GM12878 (cell line): ENCODE measurements at regions of chr14 and their contacts with region 1.

Region 1: GRCh38 chr14:24310646-24311604 is at the start of gene LTB4R:
- DNase-seq: no peak
- ATAC-seq: peak; percentile 75
- H3K4me3 ChIP-seq: peak within 1 kb of the TSS; percentile 47
- H3K27ac ChIP-seq: peak within 1 kb of the TSS; percentile 45; the same call in 1 of the 2 replicates
- H3K4me1 ChIP-seq: peaks cover 37% of the 10 kb centered on the region
- H3K27me3 ChIP-seq: no peaks in the 10 kb centered on the region
- CTCF ChIP-seq: peak; percentile 10 to 40 (median 29); a peak in 3 of 6 replicates
- EP300 ChIP-seq: no peak
- POLR2A ChIP-seq: peak; percentile 54; the same call in 1 of the 2 replicates
- RAD21 ChIP-seq: no peak
- polyA plus RNA-seq, gene LTB4R: 1.2 to 1.7 TPM

Region 2: GRCh38 chr14:23447361-23448350 is 863.3 kb before region 1 on chr14:
- CTCF ChIA-PET with region 1: no interaction called
- POLR2A ChIA-PET with region 1: no interaction called
- RAD21 ChIA-PET with region 1: no interaction called
- SMC1A ChIA-PET with region 1: no interaction called
- in situ Hi-C with region 1: no loop called
- intact Hi-C with region 1: no loop called
- DNase-seq: no peak
- ATAC-seq: peak; percentile 27; the same call in 1 of the 3 replicates
- H3K4me3 ChIP-seq: no peak overlapping the region
- H3K27ac ChIP-seq: peak overlapping the region; percentile 35
- H3K4me1 ChIP-seq: peaks cover 26% of the 10 kb centered on the region
- H3K27me3 ChIP-seq: no peaks in the 10 kb centered on the region; a peak in 1 of 4 replicates
- CTCF ChIP-seq: no peak
- EP300 ChIP-seq: no peak
- POLR2A ChIP-seq: no peak
- RAD21 ChIP-seq: no peak

Region 3: DNA sequence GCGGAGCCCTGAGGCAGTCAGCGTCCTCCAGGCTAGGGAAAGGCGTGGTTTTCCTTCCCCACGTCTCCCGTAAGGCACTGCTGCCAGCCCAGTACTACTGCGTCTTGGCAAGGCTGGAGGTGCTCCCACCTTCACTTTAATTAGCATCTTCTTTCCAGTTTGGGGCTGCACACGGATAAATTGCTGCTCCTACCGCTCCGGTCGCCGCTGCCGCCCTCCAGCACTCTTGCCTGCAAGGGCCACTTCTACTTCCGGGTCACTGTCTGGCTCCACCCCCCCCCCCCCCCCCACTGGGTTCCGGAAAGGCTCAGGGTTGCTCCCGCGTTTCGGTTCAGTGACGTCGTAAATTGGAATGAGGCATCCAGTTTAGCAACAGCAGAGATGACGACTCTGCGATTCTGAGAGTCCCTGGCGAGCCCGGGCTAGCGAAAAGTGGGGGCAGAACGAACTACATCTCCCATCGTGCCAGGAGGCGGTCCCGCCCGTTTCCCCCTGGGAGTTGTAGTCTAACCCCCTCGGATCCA is 78.7 kb before region 1 on chr14 and contains the start of gene NEDD8:
- CTCF ChIA-PET with region 1: interaction called, 11 read pairs
- POLR2A ChIA-PET with region 1: no interaction called
- RAD21 ChIA-PET with region 1: interaction called, 3 read pairs
- SMC1A ChIA-PET with region 1: no interaction called
- in situ Hi-C with region 1: no loop called
- intact Hi-C with region 1: no loop called
- DNase-seq: peak; percentile 69
- ATAC-seq: peak; percentile 86
- H3K4me3 ChIP-seq: peak within 1 kb of the TSS; percentile 87
- H3K27ac ChIP-seq: peak within 1 kb of the TSS; percentile 84
- H3K4me1 ChIP-seq: peaks cover 14% of the 10 kb centered on the region
- H3K27me3 ChIP-seq: no peaks in the 10 kb centered on the region
- CTCF ChIP-seq: no peak
- EP300 ChIP-seq: no peak
- POLR2A ChIP-seq: peak; percentile 72; the same call in 1 of the 2 replicates
- RAD21 ChIP-seq: no peak
- polyA plus RNA-seq, gene NEDD8: 838 to 991 TPM

Region 4: GRCh38 chr14:24271134-24271833 is 39.6 kb before region 1 on chr14 and contains the start of gene RABGGTA:
- CTCF ChIA-PET with region 1: interaction called, 29 read pairs
- POLR2A ChIA-PET with region 1: interaction called, 5 read pairs
- RAD21 ChIA-PET with region 1: interaction called, 8 read pairs
- SMC1A ChIA-PET with region 1: no interaction called
- in situ Hi-C with region 1: no loop called
- intact Hi-C with region 1: no loop called
- DNase-seq: peak; percentile 80
- ATAC-seq: peak; percentile 89
- H3K4me3 ChIP-seq: peak within 1 kb of the TSS; percentile 88
- H3K27ac ChIP-seq: peak within 1 kb of the TSS; percentile 99
- H3K4me1 ChIP-seq: peaks cover 25% of the 10 kb centered on the region
- H3K27me3 ChIP-seq: no peaks in the 10 kb centered on the region
- CTCF ChIP-seq: peak; percentile 84 to 93 (median 86); a peak in 5 of 6 replicates
- EP300 ChIP-seq: no peak
- POLR2A ChIP-seq: peak; percentile 93
- RAD21 ChIP-seq: 0 out of 2 replicates have a peak, but pooled peaks have one; percentile 25
- polyA plus RNA-seq, gene RABGGTA: 38.2 to 38.6 TPM

Region 5: DNA sequence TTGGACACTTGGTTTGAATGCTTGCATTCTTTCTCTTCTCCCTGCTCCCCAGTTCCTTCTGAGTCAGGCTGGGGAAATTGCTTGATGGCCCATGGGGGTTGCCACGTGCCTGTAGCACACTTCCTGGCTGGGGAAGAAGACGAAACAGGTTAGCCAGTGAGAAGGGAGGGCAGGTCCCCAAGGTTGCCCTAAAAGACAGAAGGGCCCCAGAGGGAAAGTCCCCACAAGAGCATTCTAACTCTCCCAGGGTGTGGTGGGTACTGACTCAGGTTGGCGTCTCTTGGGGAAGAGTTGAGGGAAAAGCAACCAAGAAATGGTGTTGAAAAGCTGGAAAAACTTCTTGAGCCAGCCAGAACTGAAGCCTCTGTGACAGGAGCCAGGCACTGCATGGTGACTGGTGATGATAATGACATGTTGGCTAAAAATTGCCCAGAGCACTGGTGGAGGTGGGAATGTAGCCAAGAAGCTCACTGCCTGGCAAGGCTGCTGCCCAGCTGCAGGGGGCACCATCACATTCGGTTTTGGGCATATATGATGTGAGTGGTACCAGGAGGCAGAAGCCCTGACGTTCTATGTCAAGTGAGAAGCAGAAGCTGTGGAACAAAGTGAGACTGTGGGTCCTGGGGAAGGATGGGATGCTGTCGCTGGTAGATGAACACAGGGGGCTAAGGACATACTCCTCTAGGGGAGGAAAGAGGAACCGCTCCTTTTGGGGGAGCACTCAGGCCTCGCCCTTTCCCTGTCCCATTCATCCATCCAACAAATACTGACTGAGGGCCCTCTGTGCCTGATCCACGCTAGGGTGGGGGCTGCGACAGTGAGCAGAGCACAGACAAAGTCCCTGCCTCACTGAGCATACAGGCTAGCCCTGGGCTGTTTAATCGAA is 31.4 kb before region 1 on chr14:
- CTCF ChIA-PET with region 1: interaction called, 29 read pairs
- POLR2A ChIA-PET with region 1: interaction called, 4 read pairs
- RAD21 ChIA-PET with region 1: interaction called, 14 read pairs
- SMC1A ChIA-PET with region 1: interaction called, 3 read pairs
- in situ Hi-C with region 1: no loop called
- intact Hi-C with region 1: no loop called
- DNase-seq: peak; percentile 64
- ATAC-seq: peak; percentile 88
- H3K4me3 ChIP-seq: no peak overlapping the region; the same call in 1 of the 2 replicates
- H3K27ac ChIP-seq: peak overlapping the region; percentile 53
- H3K4me1 ChIP-seq: peaks cover 43% of the 10 kb centered on the region
- H3K27me3 ChIP-seq: no peaks in the 10 kb centered on the region
- CTCF ChIP-seq: peak; percentile 44 to 47 (median 44); a peak in 5 of 6 replicates
- EP300 ChIP-seq: 0 out of 4 replicates have a peak, but pooled peaks of 1 of the 2 experiments have one; percentile 4
- POLR2A ChIP-seq: no peak
- RAD21 ChIP-seq: 0 out of 2 replicates have a peak, but pooled peaks have one; percentile 29

Region 6: DNA sequence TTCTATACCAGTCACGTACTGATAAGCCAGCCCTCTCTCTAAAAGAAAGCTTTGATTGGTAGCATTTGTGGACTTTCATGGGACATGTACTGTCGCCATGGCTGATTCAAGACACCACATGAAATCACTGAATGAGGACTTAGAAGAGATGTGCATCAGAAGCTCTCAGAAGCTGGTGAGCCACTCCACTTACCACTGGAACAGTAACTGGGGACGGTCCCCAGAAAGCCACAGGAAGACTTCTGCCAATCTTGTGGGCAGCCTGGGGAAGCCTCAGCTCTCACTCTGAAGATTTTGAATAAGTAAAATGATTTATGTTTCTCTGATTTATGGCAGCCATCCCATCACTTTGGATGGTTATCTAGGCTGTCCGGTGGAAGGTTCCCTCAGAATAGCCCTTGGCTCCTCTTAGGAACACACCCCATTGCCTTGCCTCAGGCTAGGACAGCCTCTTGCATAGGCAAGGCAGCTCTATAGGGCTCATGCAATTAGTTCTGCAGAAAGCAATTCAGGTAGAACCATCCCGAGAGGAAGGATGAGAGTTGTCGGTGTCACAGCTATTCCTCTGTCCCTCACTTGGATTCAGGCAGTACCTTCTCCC is 21.2 kb before region 1 on chr14:
- CTCF ChIA-PET with region 1: interaction called, 149 read pairs
- POLR2A ChIA-PET with region 1: no interaction called
- RAD21 ChIA-PET with region 1: interaction called, 3 read pairs
- SMC1A ChIA-PET with region 1: interaction called, 8 read pairs
- in situ Hi-C with region 1: no loop called
- intact Hi-C with region 1: no loop called
- DNase-seq: no peak
- ATAC-seq: peak; percentile 95
- H3K4me3 ChIP-seq: no peak overlapping the region
- H3K27ac ChIP-seq: 0 out of 2 replicates have a peak overlapping the region, but pooled peaks have one; percentile 24
- H3K4me1 ChIP-seq: peaks cover 11% of the 10 kb centered on the region
- H3K27me3 ChIP-seq: no peaks in the 10 kb centered on the region
- CTCF ChIP-seq: no peak
- EP300 ChIP-seq: no peak
- POLR2A ChIP-seq: no peak
- RAD21 ChIP-seq: no peak

Region 7: GRCh38 chr14:24327303-24327702 is 16.4 kb after region 1 on chr14:
- CTCF ChIA-PET with region 1: interaction called, 44 read pairs
- POLR2A ChIA-PET with region 1: interaction called, 4 read pairs
- RAD21 ChIA-PET with region 1: interaction called, 27 read pairs
- SMC1A ChIA-PET with region 1: interaction called, 9 read pairs
- in situ Hi-C with region 1: no loop called
- intact Hi-C with region 1: no loop called
- DNase-seq: no peak
- ATAC-seq: no peak
- H3K4me3 ChIP-seq: no peak overlapping the region
- H3K27ac ChIP-seq: no peak overlapping the region
- H3K4me1 ChIP-seq: peaks cover 1% of the 10 kb centered on the region
- H3K27me3 ChIP-seq: no peaks in the 10 kb centered on the region
- CTCF ChIP-seq: no peak
- EP300 ChIP-seq: no peak
- POLR2A ChIP-seq: no peak
- RAD21 ChIP-seq: no peak

Region 8: GRCh38 chr14:24518851-24519250 is 207.9 kb after region 1 on chr14:
- CTCF ChIA-PET with region 1: no interaction called
- POLR2A ChIA-PET with region 1: no interaction called
- RAD21 ChIA-PET with region 1: no interaction called
- SMC1A ChIA-PET with region 1: no interaction called
- in situ Hi-C with region 1: no loop called
- intact Hi-C with region 1: no loop called
- DNase-seq: no peak
- ATAC-seq: no peak
- H3K4me3 ChIP-seq: no peak overlapping the region
- H3K27ac ChIP-seq: no peak overlapping the region
- H3K4me1 ChIP-seq: no peaks in the 10 kb centered on the region
- H3K27me3 ChIP-seq: no peaks in the 10 kb centered on the region
- CTCF ChIP-seq: no peak
- EP300 ChIP-seq: no peak
- POLR2A ChIP-seq: no peak
- RAD21 ChIP-seq: no peak

Region 9: DNA sequence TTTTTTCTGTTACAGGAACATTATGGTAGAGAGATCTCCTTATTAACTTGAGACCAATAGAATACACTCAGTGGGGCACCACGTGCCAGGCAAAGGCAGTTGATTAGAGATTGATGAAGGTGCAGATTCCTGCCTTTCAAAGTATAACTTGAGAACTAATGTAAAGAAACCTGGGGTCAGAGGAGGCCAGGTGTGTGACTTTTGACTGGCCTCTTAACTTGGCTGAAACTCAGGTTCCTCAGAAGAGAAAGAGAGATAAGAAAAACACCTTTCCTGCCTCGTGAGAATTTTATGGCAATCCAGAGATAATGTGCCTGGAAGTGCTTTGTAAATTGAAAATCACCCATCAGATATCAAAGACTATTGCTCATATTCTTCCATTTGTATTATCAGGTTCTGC is 433.7 kb after region 1 on chr14:
- CTCF ChIA-PET with region 1: no interaction called
- POLR2A ChIA-PET with region 1: no interaction called
- RAD21 ChIA-PET with region 1: no interaction called
- SMC1A ChIA-PET with region 1: no interaction called
- in situ Hi-C with region 1: no loop called
- intact Hi-C with region 1: no loop called
- DNase-seq: no peak
- ATAC-seq: no peak
- H3K4me3 ChIP-seq: no peak overlapping the region
- H3K27ac ChIP-seq: no peak overlapping the region
- H3K4me1 ChIP-seq: no peaks in the 10 kb centered on the region
- H3K27me3 ChIP-seq: no peaks in the 10 kb centered on the region; a peak in 1 of 4 replicates
- CTCF ChIP-seq: no peak
- EP300 ChIP-seq: no peak
- POLR2A ChIP-seq: no peak
- RAD21 ChIP-seq: no peak